ENCODE measurements at regions of chr16 and their contacts with region 1.

Region 1: GRCh38 chr16:17205279-17206211 is 265.2 kb downstream of the XYLT1 start:
- DNase-seq: peak in 1 of 2 experiments; percentile 47
- H3K4me3 ChIP-seq: peak overlapping the region in 1 of 4 experiments; percentile 16; a peak in 1 of 8 replicates
- H3K27ac ChIP-seq: no peak overlapping the region
- H3K4me1 ChIP-seq: peaks cover 2 to 18% (median 8%) of the 10 kb centered on the region in 4 experiments; a peak in 6 of 7 replicates
- H3K27me3 ChIP-seq: no peaks in the 10 kb centered on the region
- CTCF ChIP-seq: no peak
- EP300 ChIP-seq: no peak
- POLR2A ChIP-seq: no peak
- RAD21 ChIP-seq: no peak

Region 2: GRCh38 chr16:17194190-17194780 is 11.3 kb before region 1 on chr16:
- CTCF ChIA-PET with region 1: interaction called, 28 read pairs
- POLR2A ChIA-PET with region 1: no interaction called
- DNase-seq: peak; percentile 70 to 94
- H3K4me3 ChIP-seq: no peak overlapping the region
- H3K27ac ChIP-seq: no peak overlapping the region
- H3K4me1 ChIP-seq: no peaks in the 10 kb centered on the region
- H3K27me3 ChIP-seq: no peaks in the 10 kb centered on the region
- CTCF ChIP-seq: peak; percentile 83 to 97 (median 93)
- EP300 ChIP-seq: no peak
- POLR2A ChIP-seq: no peak
- RAD21 ChIP-seq: peak; percentile 72 to 83

Measured in H1 (cell line).